ENCODE measurements at regions of chr2 and their contacts with region 1.

Region 1: DNA sequence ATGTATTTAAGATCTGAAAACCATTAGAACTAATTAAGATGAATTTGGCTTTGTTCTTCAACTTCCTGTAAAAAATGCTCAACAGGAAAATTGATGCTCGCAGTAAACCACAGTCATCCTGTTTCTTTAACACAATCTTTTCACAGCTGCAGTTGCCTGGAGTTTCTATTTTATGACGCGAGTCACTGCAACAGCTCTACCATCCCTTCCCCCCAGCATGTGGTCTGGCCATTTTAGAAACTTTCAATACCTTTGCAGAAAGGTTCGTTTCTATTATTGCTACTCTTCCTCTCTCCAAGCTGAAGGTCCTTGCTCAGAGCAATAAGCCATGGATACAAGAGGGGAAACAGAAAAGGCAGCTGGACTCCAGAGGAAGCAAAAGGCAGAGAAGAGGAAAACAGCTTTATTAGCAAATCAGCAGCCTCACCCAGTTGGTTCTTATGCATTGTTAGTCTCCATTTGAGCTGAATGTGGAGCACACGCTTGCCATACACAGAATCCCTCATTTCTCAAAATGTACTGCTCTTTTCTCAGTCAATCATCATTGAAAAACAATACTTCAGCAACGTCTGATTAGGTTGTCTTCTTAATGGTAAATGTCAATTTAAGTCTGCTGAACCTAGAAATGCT is 3.9 kb downstream of the WIPF1 start:
- DNase-seq: peak; percentile 57 to 93
- ATAC-seq: peak; percentile 60 to 84 (median 77)
- H3K4me3 ChIP-seq: peak overlapping the region; percentile 87
- H3K4me3 Mint-ChIP-seq: peak overlapping the region; percentile 91
- H3K27ac ChIP-seq: peak overlapping the region; percentile 97
- H3K27ac Mint-ChIP-seq: peak overlapping the region; percentile 95 to 98
- H3K4me1 ChIP-seq: peaks cover 50% of the 10 kb centered on the region
- H3K4me1 Mint-ChIP-seq: peaks cover 64 to 88% of the 10 kb centered on the region in 2 donors
- H3K27me3 ChIP-seq: no peaks in the 10 kb centered on the region
- H3K27me3 Mint-ChIP-seq: no peaks in the 10 kb centered on the region
- CTCF ChIP-seq: no peak

Region 2: GRCh38 chr2:174492963-174493431 is 100.7 kb before region 1 on chr2:
- intact Hi-C with region 1: loop called (anchors 5 kb)
- DNase-seq: peak; percentile 42 to 89
- ATAC-seq: peak; percentile 91 to 93 (median 92)
- H3K4me3 ChIP-seq: peak overlapping the region; percentile 24
- H3K4me3 Mint-ChIP-seq: peak overlapping the region; percentile 86
- H3K27ac ChIP-seq: peak overlapping the region; percentile 96
- H3K27ac Mint-ChIP-seq: peak overlapping the region; percentile 93 to 95
- H3K4me1 ChIP-seq: peaks cover 32% of the 10 kb centered on the region
- H3K4me1 Mint-ChIP-seq: peaks cover 47 to 54% of the 10 kb centered on the region in 2 donors
- H3K27me3 ChIP-seq: no peaks in the 10 kb centered on the region
- H3K27me3 Mint-ChIP-seq: no peaks in the 10 kb centered on the region
- CTCF ChIP-seq: no peak

Region 3: GRCh38 chr2:174577967-174578589 is 15.6 kb before region 1 on chr2:
- intact Hi-C with region 1: loop called (anchors 1 kb)
- DNase-seq: peak in 1 of 2 donors; percentile 85
- ATAC-seq: peak; percentile 85 to 93 (median 85)
- H3K4me3 ChIP-seq: no peak overlapping the region
- H3K4me3 Mint-ChIP-seq: no peak overlapping the region
- H3K27ac ChIP-seq: no peak overlapping the region
- H3K27ac Mint-ChIP-seq: peak overlapping the region; percentile 80 to 98
- H3K4me1 ChIP-seq: peaks cover 32% of the 10 kb centered on the region
- H3K4me1 Mint-ChIP-seq: peaks cover 67 to 77% of the 10 kb centered on the region in 2 donors
- H3K27me3 ChIP-seq: no peaks in the 10 kb centered on the region
- H3K27me3 Mint-ChIP-seq: no peaks in the 10 kb centered on the region
- CTCF ChIP-seq: peak; percentile 81

Region 4: GRCh38 chr2:174634130-174635014 is 40.7 kb after region 1 on chr2:
- intact Hi-C with region 1: loop called (anchors 2 kb)
- DNase-seq: peak; percentile 39 to 79
- ATAC-seq: peak; percentile 71 to 85 (median 72)
- H3K4me3 ChIP-seq: peak overlapping the region; percentile 65
- H3K4me3 Mint-ChIP-seq: peak overlapping the region; percentile 98
- H3K27ac ChIP-seq: peak overlapping the region; percentile 83
- H3K27ac Mint-ChIP-seq: peak overlapping the region; percentile 95 to 98
- H3K4me1 ChIP-seq: peaks cover 30% of the 10 kb centered on the region
- H3K4me1 Mint-ChIP-seq: peaks cover 62 to 63% of the 10 kb centered on the region in 2 donors
- H3K27me3 ChIP-seq: no peaks in the 10 kb centered on the region
- H3K27me3 Mint-ChIP-seq: no peaks in the 10 kb centered on the region
- CTCF ChIP-seq: no peak

Region 5: DNA sequence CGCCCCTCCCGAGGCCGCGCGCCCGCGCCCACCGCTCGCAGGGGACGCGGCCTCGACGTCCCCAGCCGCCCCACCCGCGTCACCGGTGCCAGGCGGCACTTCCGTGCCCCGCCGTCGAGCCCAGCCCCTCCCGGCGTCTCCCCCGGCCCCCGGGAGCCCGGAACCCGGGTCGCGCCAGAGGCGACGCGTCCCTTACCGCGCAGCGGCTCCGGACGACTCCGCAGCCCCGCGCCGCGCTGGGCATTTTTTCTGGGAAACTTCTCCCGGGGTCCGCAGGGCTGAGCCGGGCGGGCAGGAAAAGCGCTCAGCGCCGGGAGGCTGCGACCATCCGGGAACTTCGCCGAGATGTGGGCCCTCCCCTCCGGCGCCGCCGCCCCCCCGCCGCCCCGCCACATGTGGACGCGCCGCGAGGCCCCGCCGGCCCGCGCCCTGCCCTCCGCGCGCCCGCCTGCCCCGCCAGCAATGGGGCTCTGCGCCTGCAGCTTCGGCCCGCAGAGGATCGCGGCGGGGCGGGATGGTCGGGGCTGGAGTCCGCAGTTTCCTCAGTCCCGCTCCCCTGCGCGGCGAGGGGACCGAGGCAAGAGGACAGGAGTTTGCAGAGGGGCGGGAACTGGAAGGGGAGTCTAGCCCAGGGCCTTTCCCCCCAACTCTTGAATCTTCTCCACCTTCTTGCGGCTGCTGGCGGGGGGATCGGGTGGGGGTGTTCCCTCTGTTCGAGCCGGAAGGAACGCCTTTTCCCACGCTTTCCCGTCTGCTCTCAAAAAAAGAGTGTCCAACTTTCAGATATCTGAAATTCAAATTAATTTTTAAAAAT is 89.1 kb after region 1 on chr2:
- intact Hi-C with region 1: loop called (anchors 5 kb)
- DNase-seq: peak; percentile 63 to 78
- ATAC-seq: peak; percentile 78 to 84 (median 80)
- H3K4me3 ChIP-seq: peak overlapping the region; percentile 75
- H3K4me3 Mint-ChIP-seq: peak overlapping the region; percentile 95
- H3K27ac ChIP-seq: peak overlapping the region; percentile 40
- H3K27ac Mint-ChIP-seq: peak overlapping the region; percentile 88
- H3K4me1 ChIP-seq: peaks cover 17% of the 10 kb centered on the region
- H3K4me1 Mint-ChIP-seq: peaks cover 25 to 40% of the 10 kb centered on the region in 2 donors
- H3K27me3 ChIP-seq: no peaks in the 10 kb centered on the region
- H3K27me3 Mint-ChIP-seq: no peaks in the 10 kb centered on the region
- CTCF ChIP-seq: no peak

Region 6: DNA sequence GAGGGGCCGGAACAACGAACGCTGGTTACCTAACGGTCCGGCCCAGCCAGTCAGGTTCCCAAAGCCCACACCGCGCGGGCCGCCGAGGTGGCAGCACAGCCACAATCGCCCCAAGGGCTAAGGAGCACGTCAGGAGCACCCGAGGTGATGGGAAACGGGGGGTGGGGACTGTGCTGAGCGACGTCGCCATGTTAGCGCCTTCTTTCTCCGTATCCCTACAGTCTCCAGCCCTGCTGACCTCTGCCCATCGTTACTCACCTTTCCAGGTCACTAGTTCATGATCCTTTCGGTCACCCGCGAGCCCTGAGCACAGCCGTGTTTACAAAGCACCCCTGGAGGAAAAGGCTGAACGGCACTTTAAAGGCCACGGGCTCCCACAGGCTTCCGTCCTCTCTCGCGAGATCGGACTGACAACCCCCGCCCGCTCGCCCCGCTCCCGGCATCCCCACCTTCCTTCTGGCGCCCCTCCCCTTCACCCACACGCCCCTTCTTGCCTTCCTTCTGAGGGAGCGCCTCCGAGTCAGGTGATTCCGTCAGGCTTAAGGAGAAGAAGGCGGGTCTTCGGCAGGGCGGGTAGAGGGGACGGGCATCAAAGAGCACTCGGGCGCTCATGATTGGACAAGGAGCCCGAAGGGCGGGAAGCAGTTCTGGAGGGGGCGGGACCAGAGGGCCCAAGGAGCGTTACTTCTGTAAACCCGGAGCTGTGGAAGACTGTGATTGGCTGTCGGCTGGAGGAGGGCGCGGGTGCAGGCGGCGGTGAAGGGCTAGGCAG is 574.3 kb after region 1 on chr2 and contains the start of gene ATF2:
- intact Hi-C with region 1: loop called (anchors 5 kb)
- DNase-seq: peak; percentile 92 to 99
- ATAC-seq: peak; percentile 89 to 98 (median 90)
- H3K4me3 ChIP-seq: peak within 1 kb of the TSS; percentile 93
- H3K4me3 Mint-ChIP-seq: peak within 1 kb of the TSS; percentile 100
- H3K27ac ChIP-seq: peak within 1 kb of the TSS; percentile 87
- H3K27ac Mint-ChIP-seq: peak within 1 kb of the TSS; percentile 93 to 94
- H3K4me1 ChIP-seq: peaks cover 10% of the 10 kb centered on the region
- H3K4me1 Mint-ChIP-seq: peaks cover 18 to 36% of the 10 kb centered on the region in 2 donors
- H3K27me3 ChIP-seq: no peaks in the 10 kb centered on the region
- H3K27me3 Mint-ChIP-seq: no peaks in the 10 kb centered on the region
- CTCF ChIP-seq: no peak
- total RNA-seq, gene ATF2: 66.7 to 76.5 (median 74.4) TPM